PC-9 (cell line): ENCODE measurements at regions of chr12 and their contacts with region 1.

Region 1: GRCh38 chr12:8662593-8662992 is at the start of gene MFAP5:
- DNase-seq: peak in 1 of 2 experiments; percentile 56
- H3K4me3 ChIP-seq: no peak within 1 kb of the TSS
- H3K27ac ChIP-seq: no peak within 1 kb of the TSS
- H3K4me1 ChIP-seq: 0 out of 2 replicates have a peak, but pooled peaks cover 7% of the 10 kb centered on the region
- H3K27me3 ChIP-seq: peaks cover 4% of the 10 kb centered on the region; the same call in 1 of the 2 replicates
- CTCF ChIP-seq: no peak
- total RNA-seq, gene MFAP5: 14.6 and 18.9 TPM in 2 replicates

Region 2: GRCh38 chr12:8687846-8688601 is 25.4 kb after region 1 on chr12:
- CTCF ChIA-PET with region 1: no interaction called
- POLR2A ChIA-PET with region 1: interaction called, 39 read pairs
- intact Hi-C with region 1: no loop called
- DNase-seq: peak; percentile 59 to 71
- H3K4me3 ChIP-seq: no peak overlapping the region
- H3K27ac ChIP-seq: no peak overlapping the region
- H3K4me1 ChIP-seq: peaks cover 13% of the 10 kb centered on the region; the same call in 1 of the 2 replicates
- H3K27me3 ChIP-seq: no peaks in the 10 kb centered on the region
- CTCF ChIP-seq: no peak

Region 3: DNA sequence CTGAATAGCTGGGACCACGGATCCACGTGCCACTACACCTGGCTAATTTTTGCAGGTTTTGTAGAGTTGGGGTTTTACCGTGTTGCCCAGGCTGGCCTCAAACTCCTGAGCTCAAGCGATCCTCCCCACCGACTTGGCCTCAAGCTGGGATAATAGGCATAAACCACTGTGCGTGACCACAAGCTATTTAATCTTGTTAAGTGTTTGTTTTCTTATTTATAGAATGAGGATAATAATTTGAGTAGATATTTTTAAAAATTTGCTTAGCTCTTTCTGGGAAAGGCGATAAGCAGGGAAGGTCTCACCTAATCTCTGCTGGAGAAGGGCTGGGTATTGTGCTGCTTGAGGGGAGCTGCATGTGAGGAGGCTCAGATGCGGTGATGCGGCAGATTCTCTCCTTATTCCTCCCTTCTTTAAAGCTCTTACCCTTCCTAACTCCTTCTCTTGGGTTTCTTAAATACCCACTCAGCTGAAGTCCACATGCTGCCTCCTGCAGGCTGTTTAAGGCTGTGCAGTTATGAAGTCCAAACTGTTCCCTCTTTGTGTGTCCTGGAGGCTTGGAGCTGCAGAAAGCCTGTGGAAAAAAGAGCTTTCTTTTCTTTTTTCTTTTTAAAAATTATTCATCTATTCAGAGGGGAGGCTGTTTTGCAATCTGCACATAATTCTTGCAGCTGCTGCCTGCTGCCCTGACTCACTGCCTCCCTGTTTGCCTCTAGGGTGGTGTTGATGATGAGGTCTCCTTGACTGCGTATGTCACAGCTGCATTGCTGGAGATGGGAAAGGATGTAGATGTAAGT is 197.8 kb after region 1 on chr12:
- CTCF ChIA-PET with region 1: interaction called, 14 read pairs
- POLR2A ChIA-PET with region 1: no interaction called
- intact Hi-C with region 1: no loop called
- DNase-seq: peak; percentile 33 to 38
- H3K4me3 ChIP-seq: no peak overlapping the region
- H3K27ac ChIP-seq: no peak overlapping the region
- H3K4me1 ChIP-seq: no peaks in the 10 kb centered on the region
- H3K27me3 ChIP-seq: no peaks in the 10 kb centered on the region
- CTCF ChIP-seq: peak; percentile 72

Region 4: DNA sequence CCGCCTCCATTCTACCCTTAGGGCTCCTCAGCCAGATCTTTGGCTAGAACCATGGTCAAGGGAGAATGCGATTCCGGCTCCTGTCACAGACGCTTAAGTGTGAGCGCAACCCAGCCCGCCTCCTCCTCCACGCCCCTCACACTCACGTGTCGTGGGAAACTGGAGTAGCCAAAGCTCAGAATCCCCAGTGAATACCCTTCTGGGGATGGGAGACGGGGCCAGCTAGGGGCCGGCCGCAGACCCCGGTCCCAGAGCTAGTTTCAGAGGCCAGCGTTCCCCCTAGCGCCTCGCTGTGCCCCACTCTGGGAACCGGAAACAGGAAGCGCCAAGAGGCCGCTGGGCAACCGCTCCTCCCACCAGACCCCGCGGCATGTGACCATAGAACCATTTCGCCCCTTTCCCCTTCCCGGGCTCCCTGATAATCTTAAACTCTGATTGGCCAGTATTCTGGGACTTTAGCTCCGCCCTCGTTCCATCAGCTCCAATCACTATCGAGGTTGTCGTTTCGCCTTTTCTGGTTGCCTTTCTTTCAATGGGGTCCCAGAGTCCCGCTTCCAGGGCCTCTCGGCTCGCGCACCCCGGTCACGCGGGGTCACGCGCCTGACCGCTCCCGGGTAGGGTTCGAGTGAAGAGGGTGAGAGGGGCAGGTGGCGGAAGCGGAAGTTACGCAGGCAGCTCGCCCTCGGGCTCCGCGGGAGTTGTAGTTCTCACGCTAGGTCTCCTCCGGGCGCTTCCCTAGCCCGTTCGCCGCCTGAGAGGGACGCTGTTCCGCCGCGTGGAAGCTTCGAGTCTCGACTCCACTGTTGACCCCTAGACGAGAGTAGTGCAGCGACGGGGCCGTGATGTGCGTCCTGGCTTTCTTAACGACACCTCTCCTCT is 287.0 kb after region 1 on chr12 and contains the start of gene M6PR:
- CTCF ChIA-PET with region 1: interaction called, 8 read pairs
- POLR2A ChIA-PET with region 1: no interaction called
- intact Hi-C with region 1: loop called (anchors 5 kb)
- DNase-seq: peak; percentile 92 to 97
- H3K4me3 ChIP-seq: peak within 1 kb of the TSS; percentile 93
- H3K27ac ChIP-seq: peak within 1 kb of the TSS; percentile 88
- H3K4me1 ChIP-seq: peaks cover 22% of the 10 kb centered on the region
- H3K27me3 ChIP-seq: no peaks in the 10 kb centered on the region
- CTCF ChIP-seq: no peak; the same call in 1 of the 2 replicates
- total RNA-seq, gene M6PR: 237 and 266 TPM in 2 replicates

Region 5: DNA sequence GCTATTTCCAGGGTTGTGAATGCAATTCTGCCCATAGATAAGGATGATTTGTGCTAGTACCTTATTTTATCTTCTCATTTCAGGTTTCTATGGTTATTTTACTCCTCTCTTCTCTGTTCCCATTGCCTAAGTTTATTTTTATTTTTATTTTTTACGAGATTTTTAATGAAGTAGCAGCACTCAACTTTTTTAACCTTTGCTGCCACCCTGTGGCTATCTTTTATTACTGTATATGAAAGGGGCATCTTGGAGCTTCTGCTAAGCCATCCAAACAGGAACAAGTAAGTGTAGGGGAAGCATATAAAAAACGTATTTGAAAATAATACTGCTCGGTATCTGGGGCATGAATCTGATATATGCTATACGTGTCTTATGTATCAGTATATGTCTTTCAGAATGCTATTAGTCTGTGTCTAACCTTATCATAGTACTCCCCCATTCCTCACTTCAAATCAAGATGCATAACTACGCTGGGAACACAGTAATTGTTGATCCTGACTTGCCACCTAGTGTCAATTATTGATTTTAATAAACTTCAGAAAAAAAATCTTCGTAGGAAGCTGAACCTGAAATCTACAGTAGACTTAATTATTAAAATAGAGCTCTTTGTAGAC is 387.0 kb after region 1 on chr12:
- CTCF ChIA-PET with region 1: interaction called, 53 read pairs
- POLR2A ChIA-PET with region 1: no interaction called
- intact Hi-C with region 1: loop called (anchors 1 kb)
- DNase-seq: peak; percentile 34 to 52
- H3K4me3 ChIP-seq: no peak overlapping the region
- H3K27ac ChIP-seq: no peak overlapping the region
- H3K4me1 ChIP-seq: no peaks in the 10 kb centered on the region
- H3K27me3 ChIP-seq: peaks cover 13% of the 10 kb centered on the region
- CTCF ChIP-seq: peak; percentile 80

Region 6: GRCh38 chr12:9149372-9149771 is 486.8 kb after region 1 on chr12:
- CTCF ChIA-PET with region 1: no interaction called
- POLR2A ChIA-PET with region 1: interaction called, 11 read pairs
- intact Hi-C with region 1: no loop called
- DNase-seq: no peak
- H3K4me3 ChIP-seq: no peak overlapping the region
- H3K27ac ChIP-seq: no peak overlapping the region
- H3K4me1 ChIP-seq: no peaks in the 10 kb centered on the region
- H3K27me3 ChIP-seq: no peaks in the 10 kb centered on the region; the same call in 1 of the 2 replicates
- CTCF ChIP-seq: peak; percentile 51